Calu3 (cell line): ENCODE measurements at regions of chr6 and their contacts with region 1.

Region 1: GRCh38 chr6:29016559-29017427 is 11.7 kb upstream of the ZNF311 start:
- DNase-seq: peak; percentile 88
- H3K4me3 Mint-ChIP-seq: peak overlapping the region; percentile 90
- H3K27ac Mint-ChIP-seq: peak overlapping the region; percentile 62
- H3K4me1 Mint-ChIP-seq: peaks cover 8% of the 10 kb centered on the region
- H3K27me3 Mint-ChIP-seq: peaks cover 4% of the 10 kb centered on the region
- CTCF ChIP-seq: peak; percentile 92

Region 2: DNA sequence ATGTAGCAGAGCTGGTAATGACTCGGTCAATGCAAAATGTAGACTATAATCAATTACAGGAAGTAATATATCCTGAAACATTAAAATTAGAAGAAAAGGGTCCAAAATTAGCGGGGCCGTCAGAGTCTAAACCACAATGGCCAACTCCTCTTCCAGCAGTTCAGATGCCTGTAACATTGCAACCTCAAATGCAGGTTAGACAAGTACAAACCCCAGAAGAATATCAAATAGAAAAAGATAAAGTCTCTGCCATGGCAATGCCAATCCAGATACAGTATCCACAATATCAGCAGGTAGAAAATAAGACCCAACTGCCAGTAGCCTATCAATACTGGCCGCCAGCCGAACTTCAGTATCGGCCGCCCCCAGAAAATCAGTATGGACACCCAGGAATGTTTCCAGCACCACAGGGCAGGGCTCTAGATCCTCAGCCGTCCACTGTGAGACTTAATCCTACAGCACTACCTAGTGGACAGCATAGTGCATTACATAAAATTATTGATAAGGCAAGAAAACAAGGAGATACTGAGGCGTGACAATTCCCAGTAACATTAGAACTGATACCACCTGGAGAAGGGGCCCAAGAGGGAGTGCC is 332.8 kb before region 1 on chr6:
- CTCF ChIA-PET with region 1: no interaction called
- intact Hi-C with region 1: loop called (anchors 1 kb)
- DNase-seq: peak; percentile 48
- H3K4me3 Mint-ChIP-seq: peak overlapping the region; percentile 65
- H3K27ac Mint-ChIP-seq: no peak overlapping the region
- H3K4me1 Mint-ChIP-seq: peaks cover 35% of the 10 kb centered on the region
- H3K27me3 Mint-ChIP-seq: no peaks in the 10 kb centered on the region
- CTCF ChIP-seq: peak; percentile 85

Region 3: DNA sequence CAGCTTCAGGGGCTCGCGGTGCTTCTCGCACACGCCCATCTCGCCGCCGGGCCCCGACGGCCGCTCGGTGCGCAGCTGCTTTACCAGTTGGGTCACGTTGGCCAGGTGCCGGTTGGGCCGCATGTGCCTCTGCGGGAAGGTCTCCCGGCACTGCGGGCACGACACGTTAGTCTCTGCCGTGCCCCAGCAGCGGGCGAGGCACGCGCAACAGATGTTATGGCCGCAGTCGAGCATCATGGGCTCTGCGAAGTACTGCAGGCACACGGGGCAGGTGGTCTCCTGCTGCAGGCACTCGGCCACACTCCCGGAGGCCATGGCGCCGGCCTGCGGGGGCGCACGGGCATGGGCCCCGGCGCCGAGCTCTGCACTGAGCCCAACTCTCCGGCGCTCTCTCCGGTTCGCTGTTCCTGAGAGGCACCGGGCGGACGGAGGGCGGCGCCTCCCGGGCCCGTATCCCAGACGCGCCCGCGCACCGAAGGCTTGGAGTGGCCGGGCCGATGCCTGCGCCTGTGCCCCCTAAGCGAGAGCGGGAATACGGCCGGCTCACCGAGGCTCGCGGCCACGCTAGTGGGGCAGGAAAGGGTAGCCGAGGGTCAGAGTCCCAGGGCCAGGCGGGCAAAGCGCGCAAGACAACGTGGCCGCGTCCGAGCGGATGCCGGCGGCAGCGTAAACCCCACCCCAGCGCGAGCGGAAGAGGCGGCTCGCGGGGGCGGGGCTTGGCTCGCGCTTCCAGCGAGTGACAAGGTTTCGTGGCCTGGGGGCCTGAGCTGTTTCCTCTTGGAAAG is 93.3 kb before region 1 on chr6 and contains the start of gene TRIM27:
- CTCF ChIA-PET with region 1: interaction called, 8 read pairs
- intact Hi-C with region 1: loop called (anchors 2 kb)
- DNase-seq: peak; percentile 95
- H3K4me3 Mint-ChIP-seq: peak within 1 kb of the TSS; percentile 96
- H3K27ac Mint-ChIP-seq: peak within 1 kb of the TSS; percentile 98
- H3K4me1 Mint-ChIP-seq: peaks cover 27% of the 10 kb centered on the region
- H3K27me3 Mint-ChIP-seq: no peaks in the 10 kb centered on the region
- CTCF ChIP-seq: no peak
- total RNA-seq, gene TRIM27: 85.8 and 91.6 TPM in 2 replicates

Region 4: DNA sequence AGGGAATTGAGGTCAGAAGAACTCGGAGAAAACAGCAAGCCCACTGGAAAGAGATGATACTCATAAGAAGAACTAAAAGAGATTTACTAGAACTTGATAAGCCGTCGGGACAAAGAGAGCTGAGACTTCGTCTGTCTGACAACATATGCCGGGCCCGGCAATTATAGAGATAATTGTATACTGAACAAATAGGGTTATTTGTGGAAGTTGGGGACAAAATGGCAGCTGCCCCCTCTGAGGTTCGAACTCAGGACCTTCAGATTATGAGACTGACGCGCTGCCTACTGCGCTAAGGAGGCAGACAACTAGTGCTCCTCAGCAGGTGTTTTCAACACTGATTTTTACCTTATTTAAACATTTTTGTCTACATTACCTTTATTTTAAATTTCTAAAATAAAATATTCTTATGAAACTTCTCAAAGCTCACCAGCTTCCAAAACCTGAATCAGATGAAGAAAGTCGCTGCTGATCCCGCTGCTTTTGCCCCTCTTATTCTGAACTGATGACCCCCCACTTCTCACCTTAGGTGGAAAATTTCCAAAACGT is 63.7 kb before region 1 on chr6:
- CTCF ChIA-PET with region 1: interaction called, 5 read pairs
- intact Hi-C with region 1: loop called (anchors 2 kb)
- DNase-seq: peak; percentile 71
- H3K4me3 Mint-ChIP-seq: peak overlapping the region; percentile 87
- H3K27ac Mint-ChIP-seq: peak overlapping the region; percentile 95
- H3K4me1 Mint-ChIP-seq: peaks cover 28% of the 10 kb centered on the region
- H3K27me3 Mint-ChIP-seq: no peaks in the 10 kb centered on the region
- CTCF ChIP-seq: no peak

Region 5: DNA sequence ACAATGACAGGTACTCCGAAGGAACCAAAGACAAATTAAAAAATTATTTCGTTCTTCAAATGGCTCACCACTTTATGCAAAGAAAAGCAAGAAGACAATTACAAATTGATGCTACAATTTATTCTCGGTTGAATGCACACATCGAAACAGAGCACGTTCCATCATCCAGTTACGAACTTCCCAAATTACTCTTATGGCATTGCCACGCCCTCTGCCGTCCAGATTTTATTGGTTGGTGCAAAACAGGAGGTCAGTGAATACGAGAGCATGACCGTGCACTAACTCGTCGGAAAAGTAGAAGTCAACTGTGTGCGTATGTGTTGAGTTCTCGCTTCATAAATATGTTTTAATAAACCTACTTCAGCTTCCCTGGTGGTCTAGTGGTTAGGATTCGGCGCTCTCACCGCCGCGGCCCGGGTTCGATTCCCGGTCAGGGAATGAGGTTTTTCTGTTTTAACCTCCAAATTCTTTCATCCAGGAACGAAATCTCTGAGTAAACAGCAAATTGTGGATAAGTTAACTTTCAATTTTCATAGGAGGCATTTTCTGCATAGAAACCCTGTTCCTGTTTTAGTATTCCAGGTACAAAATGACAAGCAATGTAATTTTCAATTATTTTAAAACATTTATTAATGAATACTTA is 34.8 kb before region 1 on chr6:
- CTCF ChIA-PET with region 1: interaction called, 15 read pairs
- intact Hi-C with region 1: loop called (anchors 1 kb)
- DNase-seq: peak; percentile 81
- H3K4me3 Mint-ChIP-seq: peak overlapping the region; percentile 68
- H3K27ac Mint-ChIP-seq: peak overlapping the region; percentile 60
- H3K4me1 Mint-ChIP-seq: peaks cover 48% of the 10 kb centered on the region
- H3K27me3 Mint-ChIP-seq: no peaks in the 10 kb centered on the region
- CTCF ChIP-seq: no peak

Region 6: GRCh38 chr6:29183594-29183993 is 166.8 kb after region 1 on chr6:
- CTCF ChIA-PET with region 1: no interaction called
- intact Hi-C with region 1: no loop called
- DNase-seq: no peak
- H3K4me3 Mint-ChIP-seq: no peak overlapping the region
- H3K27ac Mint-ChIP-seq: no peak overlapping the region
- H3K4me1 Mint-ChIP-seq: no peaks in the 10 kb centered on the region
- H3K27me3 Mint-ChIP-seq: no peaks in the 10 kb centered on the region
- CTCF ChIP-seq: no peak